ENCODE measurements at regions of chr3 and their contacts with region 1.

Region 1: GRCh38 chr3:30505866-30506520 is 100.4 kb upstream of the TGFBR2 start:
- DNase-seq: no peak
- ATAC-seq: no peak
- H3K4me3 ChIP-seq: no peak overlapping the region
- H3K4me3 Mint-ChIP-seq: no peak overlapping the region
- H3K27ac ChIP-seq: no peak overlapping the region
- H3K27ac Mint-ChIP-seq: no peak overlapping the region
- H3K4me1 ChIP-seq: no peaks in the 10 kb centered on the region
- H3K4me1 Mint-ChIP-seq: peaks cover 7% of the 10 kb centered on the region
- H3K27me3 ChIP-seq: no peaks in the 10 kb centered on the region
- H3K27me3 Mint-ChIP-seq: no peaks in the 10 kb centered on the region
- CTCF ChIP-seq: no peak

Region 2: GRCh38 chr3:30551266-30551665 is 45.3 kb after region 1 on chr3:
- CTCF ChIA-PET with region 1: no interaction called
- POLR2A ChIA-PET with region 1: interaction called, 4 read pairs
- intact Hi-C with region 1: loop called in 1 of 2 experiments (anchors 1 kb)
- DNase-seq: no peak
- ATAC-seq: no peak
- H3K4me3 ChIP-seq: no peak overlapping the region
- H3K4me3 Mint-ChIP-seq: no peak overlapping the region
- H3K27ac ChIP-seq: no peak overlapping the region
- H3K27ac Mint-ChIP-seq: no peak overlapping the region
- H3K4me1 ChIP-seq: no peaks in the 10 kb centered on the region
- H3K4me1 Mint-ChIP-seq: peaks cover 9% of the 10 kb centered on the region
- H3K27me3 ChIP-seq: no peaks in the 10 kb centered on the region
- H3K27me3 Mint-ChIP-seq: no peaks in the 10 kb centered on the region
- CTCF ChIP-seq: no peak

Region 3: GRCh38 chr3:30711151-30711550 is 205.2 kb after region 1 on chr3:
- CTCF ChIA-PET with region 1: no interaction called
- POLR2A ChIA-PET with region 1: no interaction called
- intact Hi-C with region 1: no loop called
- DNase-seq: no peak
- ATAC-seq: no peak
- H3K4me3 ChIP-seq: no peak overlapping the region
- H3K4me3 Mint-ChIP-seq: no peak overlapping the region
- H3K27ac ChIP-seq: no peak overlapping the region
- H3K27ac Mint-ChIP-seq: no peak overlapping the region
- H3K4me1 ChIP-seq: peaks cover 20% of the 10 kb centered on the region
- H3K4me1 Mint-ChIP-seq: peaks cover 22% of the 10 kb centered on the region
- H3K27me3 ChIP-seq: no peaks in the 10 kb centered on the region
- H3K27me3 Mint-ChIP-seq: no peaks in the 10 kb centered on the region
- CTCF ChIP-seq: no peak